ENCODE measurements at regions of chr9 and their contacts with region 1.

Region 1: GRCh38 chr9:133782157-133783130 is 44.3 kb upstream of the SARDH start:
- DNase-seq: peak; percentile 85
- ATAC-seq: peak; percentile 16
- H3K4me3 ChIP-seq: no peak overlapping the region
- H3K4me3 Mint-ChIP-seq: peak overlapping the region; percentile 59
- H3K27ac ChIP-seq: peak overlapping the region; percentile 2 to 59
- H3K27ac Mint-ChIP-seq: peak overlapping the region; percentile 82
- H3K4me1 ChIP-seq: peaks cover 54 to 62% of the 10 kb centered on the region in 2 donors
- H3K4me1 Mint-ChIP-seq: peaks cover 61% of the 10 kb centered on the region
- H3K27me3 ChIP-seq: no peaks in the 10 kb centered on the region
- H3K27me3 Mint-ChIP-seq: no peaks in the 10 kb centered on the region
- CTCF ChIP-seq: peak; percentile 85

Region 2: DNA sequence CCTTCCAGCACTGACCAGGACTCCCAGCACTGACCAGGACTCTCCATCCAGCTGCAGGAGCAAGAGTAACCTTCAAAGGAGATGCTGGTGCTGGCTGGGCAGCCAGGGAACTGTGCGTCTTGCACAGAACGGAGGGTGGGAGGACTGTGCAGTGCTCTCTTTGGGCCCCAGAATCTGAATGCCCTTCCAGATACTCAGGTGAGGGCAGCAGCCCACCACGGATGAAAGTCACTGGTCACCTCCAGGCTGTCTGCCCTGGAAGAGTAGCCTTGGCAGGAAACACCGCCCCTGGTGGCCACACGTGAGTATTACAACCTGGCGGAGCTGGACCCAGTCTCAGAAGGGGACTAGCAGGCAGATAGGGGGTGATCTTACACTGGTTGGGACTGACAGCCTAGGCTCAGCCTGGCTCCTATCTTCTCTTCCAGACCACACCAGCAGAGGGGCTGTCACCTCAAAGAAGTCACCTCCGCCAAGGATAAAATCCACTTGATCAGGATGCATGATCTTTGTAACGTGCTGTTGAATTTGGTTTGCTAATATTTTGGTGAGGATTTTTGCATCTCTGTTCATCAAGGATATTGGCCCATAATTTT is 39.5 kb before region 1 on chr9:
- CTCF ChIA-PET with region 1: interaction called, 14 read pairs
- POLR2A ChIA-PET with region 1: no interaction called
- intact Hi-C with region 1: loop called (anchors 5 kb)
- DNase-seq: peak; percentile 82
- ATAC-seq: peak; percentile 91
- H3K4me3 ChIP-seq: no peak overlapping the region
- H3K4me3 Mint-ChIP-seq: no peak overlapping the region
- H3K27ac ChIP-seq: no peak overlapping the region
- H3K27ac Mint-ChIP-seq: no peak overlapping the region
- H3K4me1 ChIP-seq: peaks cover 8 to 11% of the 10 kb centered on the region in 2 donors
- H3K4me1 Mint-ChIP-seq: peaks cover 4% of the 10 kb centered on the region
- H3K27me3 ChIP-seq: peaks cover 0 to 8% (median 2%) of the 10 kb centered on the region in 4 experiments
- H3K27me3 Mint-ChIP-seq: peaks cover 33% of the 10 kb centered on the region
- CTCF ChIP-seq: peak; percentile 97

Region 3: DNA sequence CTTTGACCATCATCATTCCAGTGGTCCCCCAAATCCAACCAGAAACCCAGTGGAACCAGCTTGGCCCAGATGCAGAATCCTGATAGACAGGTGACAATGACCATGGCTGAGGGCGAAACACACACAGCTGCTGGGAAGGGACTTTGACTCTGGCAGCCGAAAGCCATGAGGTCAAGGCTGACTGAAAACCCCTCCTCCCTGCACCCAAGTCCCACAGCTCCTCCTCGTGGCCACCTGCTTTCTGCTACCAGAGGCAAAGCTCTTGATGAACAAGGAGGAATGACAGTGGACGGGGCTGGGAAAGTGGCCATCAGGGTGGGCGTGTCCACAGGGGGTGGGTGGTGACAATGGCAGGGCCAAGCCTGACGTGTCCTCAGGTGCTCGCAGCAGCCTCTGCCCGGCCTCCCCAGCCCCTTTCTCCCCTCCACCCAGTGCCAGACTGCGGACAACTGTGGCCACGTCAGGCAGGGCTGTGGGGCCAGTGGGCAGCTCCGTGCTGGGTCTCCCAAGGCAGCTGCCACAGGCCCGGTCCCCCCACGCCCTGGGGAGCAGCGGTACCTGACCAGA is 13.5 kb before region 1 on chr9:
- CTCF ChIA-PET with region 1: interaction called, 12 read pairs
- POLR2A ChIA-PET with region 1: no interaction called
- intact Hi-C with region 1: no loop called
- DNase-seq: no peak
- ATAC-seq: no peak
- H3K4me3 ChIP-seq: no peak overlapping the region
- H3K4me3 Mint-ChIP-seq: no peak overlapping the region
- H3K27ac ChIP-seq: no peak overlapping the region
- H3K27ac Mint-ChIP-seq: no peak overlapping the region
- H3K4me1 ChIP-seq: no peaks in the 10 kb centered on the region
- H3K4me1 Mint-ChIP-seq: no peaks in the 10 kb centered on the region
- H3K27me3 ChIP-seq: no peaks in the 10 kb centered on the region
- H3K27me3 Mint-ChIP-seq: no peaks in the 10 kb centered on the region
- CTCF ChIP-seq: no peak

Region 4: DNA sequence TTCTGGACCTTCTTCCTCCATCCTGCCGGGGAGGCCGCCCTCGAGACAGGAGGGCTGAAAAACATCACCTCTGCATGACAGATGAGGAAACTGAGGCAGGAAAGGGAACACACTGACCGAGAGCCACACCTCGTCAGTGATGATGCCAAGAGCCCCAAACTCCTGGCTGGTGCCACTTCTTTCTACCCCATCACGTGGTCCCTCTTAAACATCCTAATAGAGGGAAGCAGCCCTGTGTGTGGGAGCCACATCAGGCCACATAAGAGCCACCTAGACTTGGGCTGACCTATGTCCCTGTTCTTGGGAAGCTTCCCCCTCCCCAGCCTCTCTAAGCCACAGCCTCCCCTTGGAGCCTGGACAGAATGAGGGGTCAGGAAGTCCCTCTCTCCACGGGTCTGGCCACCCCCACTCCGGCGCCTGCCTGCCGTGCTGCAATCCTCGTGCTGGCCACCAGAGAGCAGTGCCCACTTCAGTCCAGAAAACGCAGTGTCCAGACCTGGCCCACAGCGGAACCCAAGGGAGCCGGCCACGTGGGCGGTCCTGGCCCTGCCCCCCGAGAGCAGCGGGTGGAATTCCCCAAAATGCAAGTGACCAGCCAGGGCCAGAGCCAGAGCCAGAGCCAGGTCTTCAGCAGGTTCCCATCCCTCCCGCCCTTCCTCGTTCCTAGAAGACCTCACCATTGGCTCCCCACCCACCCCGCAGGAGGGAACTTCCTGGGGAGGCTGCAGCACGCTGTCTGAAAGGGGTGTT is 10.5 kb after region 1 on chr9:
- CTCF ChIA-PET with region 1: interaction called, 95 read pairs
- POLR2A ChIA-PET with region 1: no interaction called
- intact Hi-C with region 1: loop called (anchors 1 kb)
- DNase-seq: peak; percentile 77
- ATAC-seq: peak; percentile 85
- H3K4me3 ChIP-seq: peak overlapping the region in 3 of 5 experiments; percentile 11 to 43 (median 20)
- H3K4me3 Mint-ChIP-seq: peak overlapping the region; percentile 52
- H3K27ac ChIP-seq: peak overlapping the region; percentile 17 to 41
- H3K27ac Mint-ChIP-seq: peak overlapping the region; percentile 70
- H3K4me1 ChIP-seq: peaks cover 48 to 56% of the 10 kb centered on the region in 2 donors
- H3K4me1 Mint-ChIP-seq: peaks cover 69% of the 10 kb centered on the region
- H3K27me3 ChIP-seq: no peaks in the 10 kb centered on the region
- H3K27me3 Mint-ChIP-seq: no peaks in the 10 kb centered on the region
- CTCF ChIP-seq: peak; percentile 87

Region 5: GRCh38 chr9:134099123-134099787 is 316.8 kb after region 1 on chr9:
- CTCF ChIA-PET with region 1: interaction called, 17 read pairs
- POLR2A ChIA-PET with region 1: no interaction called
- intact Hi-C with region 1: no loop called
- DNase-seq: peak; percentile 80
- ATAC-seq: peak; percentile 92
- H3K4me3 ChIP-seq: no peak overlapping the region
- H3K4me3 Mint-ChIP-seq: no peak overlapping the region
- H3K27ac ChIP-seq: no peak overlapping the region
- H3K27ac Mint-ChIP-seq: no peak overlapping the region
- H3K4me1 ChIP-seq: no peaks in the 10 kb centered on the region
- H3K4me1 Mint-ChIP-seq: peaks cover 4% of the 10 kb centered on the region
- H3K27me3 ChIP-seq: peaks cover 0 to 3% (median 2%) of the 10 kb centered on the region in 4 experiments
- H3K27me3 Mint-ChIP-seq: peaks cover 21% of the 10 kb centered on the region
- CTCF ChIP-seq: peak; percentile 88

Measured in B cell (primary cell).